ENCODE measurements at regions of chr17 and their contacts with region 1.

Region 1: DNA sequence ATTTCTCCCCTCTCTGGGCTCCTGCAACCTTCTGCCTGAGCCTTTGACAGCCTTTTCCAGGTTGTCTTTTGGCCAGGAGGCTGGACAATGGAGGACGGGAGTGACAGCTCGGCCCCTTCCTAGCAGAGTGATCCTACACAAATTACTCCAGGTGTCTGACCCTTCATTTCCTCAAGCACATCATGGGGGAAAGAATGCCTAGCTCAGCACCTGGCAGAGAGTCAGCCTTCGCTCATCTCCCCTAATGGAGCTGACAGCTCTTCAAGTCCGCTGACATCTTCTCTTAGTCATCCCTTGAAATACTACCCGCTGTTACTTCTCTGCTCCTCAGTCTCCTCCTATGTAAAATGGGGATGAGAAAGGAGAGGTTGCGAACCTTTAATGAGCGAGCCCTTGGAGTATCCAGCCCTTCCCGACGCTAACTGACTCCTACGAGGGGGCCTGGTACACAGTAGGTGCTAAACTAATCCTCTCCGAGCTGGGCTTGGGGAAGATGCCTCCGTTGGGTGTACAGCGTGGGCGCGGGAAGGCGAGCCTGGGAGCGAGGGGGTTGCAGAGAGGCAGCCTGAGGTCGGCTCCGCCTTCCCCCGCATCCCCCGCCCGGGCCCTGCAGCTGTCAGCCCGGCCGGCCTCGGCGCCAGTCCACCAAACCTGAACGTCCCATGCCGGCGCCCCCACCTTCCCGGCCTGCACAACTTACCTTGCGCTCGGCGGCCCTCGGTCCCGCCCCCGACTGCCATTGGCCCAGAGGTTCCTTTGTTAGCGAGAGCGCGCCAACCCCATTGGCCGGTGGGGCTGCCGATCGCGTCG is 481 bp upstream of the MPRIP start:
- DNase-seq: peak; percentile 96
- H3K4me3 ChIP-seq: peak overlapping the region; percentile 44 to 57 (median 53)
- H3K27ac ChIP-seq: peak overlapping the region; percentile 60
- H3K4me1 ChIP-seq: peaks cover 29% of the 10 kb centered on the region
- H3K27me3 ChIP-seq: no peaks in the 10 kb centered on the region
- CTCF ChIP-seq: no peak

Region 2: DNA sequence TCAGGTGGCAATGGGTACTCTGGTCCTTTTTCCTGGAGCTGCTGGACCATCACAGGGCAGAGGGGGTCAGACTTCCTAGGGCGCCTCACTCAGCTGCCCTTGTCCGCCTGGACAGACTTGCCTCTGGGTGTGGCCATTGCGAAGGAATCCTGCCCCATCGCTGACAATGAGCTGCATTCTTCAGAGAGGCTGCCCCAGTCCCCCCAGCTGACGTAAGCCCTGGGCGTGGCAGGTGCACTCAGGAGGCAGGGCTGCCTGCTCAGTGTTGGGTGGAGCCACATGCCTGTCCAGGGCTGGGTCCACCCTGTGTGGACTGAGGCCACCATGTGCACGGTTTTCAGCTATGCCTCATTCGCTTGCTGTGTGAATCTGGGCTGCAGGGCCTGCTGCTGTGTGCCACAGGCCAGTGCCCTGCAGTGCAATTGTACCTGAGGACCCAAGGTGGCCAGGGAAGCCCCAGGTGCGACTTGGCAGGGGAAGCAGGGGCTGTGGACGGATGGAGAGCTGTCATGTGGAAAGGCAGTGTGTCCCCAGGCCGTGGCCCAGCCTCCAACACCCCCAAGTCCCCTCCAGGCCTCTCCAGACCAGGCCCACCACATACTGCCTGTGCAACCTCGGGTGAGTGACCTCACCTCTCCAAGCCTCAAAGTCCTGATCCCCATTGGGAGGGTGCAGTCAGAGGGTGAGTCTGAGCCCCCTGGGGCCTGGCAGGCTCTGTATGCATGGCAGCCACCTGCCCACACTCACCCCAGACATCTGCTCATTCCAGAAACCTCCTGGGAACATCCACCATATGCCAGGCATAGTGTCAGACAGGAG is 13.5 kb before region 1 on chr17:
- CTCF ChIA-PET with region 1: no interaction called
- dilution Hi-C with region 1: no loop called
- in situ Hi-C with region 1: no loop called
- intact Hi-C with region 1: loop called (anchors 1 kb)
- DNase-seq: peak; percentile 99
- H3K4me3 ChIP-seq: no peak overlapping the region
- H3K27ac ChIP-seq: peak overlapping the region; percentile 97
- H3K4me1 ChIP-seq: peaks cover 47% of the 10 kb centered on the region
- H3K27me3 ChIP-seq: no peaks in the 10 kb centered on the region
- CTCF ChIP-seq: no peak

Region 3: GRCh38 chr17:17063546-17064122 is 21.9 kb after region 1 on chr17:
- CTCF ChIA-PET with region 1: no interaction called
- dilution Hi-C with region 1: no loop called
- in situ Hi-C with region 1: no loop called
- intact Hi-C with region 1: loop called (anchors 2 kb)
- DNase-seq: peak; percentile 36
- H3K4me3 ChIP-seq: no peak overlapping the region
- H3K27ac ChIP-seq: peak overlapping the region; percentile 2
- H3K4me1 ChIP-seq: peaks cover 38% of the 10 kb centered on the region
- H3K27me3 ChIP-seq: no peaks in the 10 kb centered on the region
- CTCF ChIP-seq: no peak

Region 4: GRCh38 chr17:17075038-17075781 is 33.4 kb after region 1 on chr17:
- CTCF ChIA-PET with region 1: no interaction called
- dilution Hi-C with region 1: no loop called
- in situ Hi-C with region 1: no loop called
- intact Hi-C with region 1: loop called (anchors 1 kb)
- DNase-seq: peak; percentile 54
- H3K4me3 ChIP-seq: no peak overlapping the region
- H3K27ac ChIP-seq: peak overlapping the region; percentile 9
- H3K4me1 ChIP-seq: peaks cover 54% of the 10 kb centered on the region
- H3K27me3 ChIP-seq: no peaks in the 10 kb centered on the region
- CTCF ChIP-seq: no peak

Region 5: DNA sequence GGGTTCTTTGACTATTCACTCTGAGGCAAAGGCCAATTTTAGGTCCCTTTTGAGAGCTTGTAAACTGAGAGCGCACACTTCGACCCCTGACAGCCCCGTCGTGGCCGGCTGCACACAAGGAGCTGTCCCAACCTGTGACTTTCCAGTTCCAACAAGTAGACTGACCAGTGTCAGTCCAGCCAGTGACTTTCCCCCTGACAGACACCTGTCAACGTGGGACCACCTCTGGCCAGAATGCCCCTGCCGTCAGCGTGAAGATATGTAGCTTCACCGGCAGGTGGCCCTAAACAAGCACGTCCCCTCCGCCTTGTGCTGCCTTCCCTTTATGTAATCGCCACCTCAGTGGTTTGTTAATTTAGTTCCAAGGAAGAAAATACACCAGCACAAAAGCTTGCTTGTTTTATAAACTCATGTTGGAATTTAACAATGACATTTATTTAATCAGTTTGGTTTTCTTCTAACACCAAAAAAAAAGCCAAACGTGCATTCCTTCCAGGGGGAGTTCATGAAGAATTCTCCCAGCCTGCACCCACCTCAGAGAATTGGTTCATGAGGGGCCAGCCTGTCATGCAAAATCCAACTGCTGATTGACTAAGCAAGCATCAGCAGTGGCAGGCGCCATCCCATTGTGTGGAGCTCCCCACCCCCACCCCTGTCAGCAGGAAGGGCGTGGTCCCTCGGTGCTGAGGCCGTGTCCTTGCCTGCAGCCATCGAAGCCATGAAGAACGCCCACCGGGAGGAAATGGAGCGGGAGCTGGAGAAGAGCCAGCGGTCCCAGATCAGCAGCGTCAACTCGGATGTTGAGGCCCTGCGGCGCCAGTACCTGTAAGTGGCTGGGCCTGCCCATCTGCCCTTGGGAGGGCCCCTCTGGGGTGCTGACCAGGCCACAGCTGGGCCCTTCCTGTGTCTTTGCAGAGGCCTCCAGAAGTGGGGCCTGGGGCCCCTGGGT is 130.5 kb after region 1 on chr17:
- CTCF ChIA-PET with region 1: no interaction called
- dilution Hi-C with region 1: no loop called
- in situ Hi-C with region 1: no loop called
- intact Hi-C with region 1: loop called (anchors 5 kb)
- DNase-seq: no peak
- H3K4me3 ChIP-seq: no peak overlapping the region
- H3K27ac ChIP-seq: no peak overlapping the region
- H3K4me1 ChIP-seq: peaks cover 40% of the 10 kb centered on the region
- H3K27me3 ChIP-seq: no peaks in the 10 kb centered on the region
- CTCF ChIP-seq: peak; percentile 15 to 36

Measured in mammary epithelial cell (primary cell).